ENCODE measurements at regions of chr5 and their contacts with region 1.

Region 1: GRCh38 chr5:137901011-137901817 is 12.0 kb downstream of the PKD2L2 start:
- DNase-seq: peak in 1 of 4 experiments; percentile 47
- ATAC-seq: peak; percentile 67
- H3K4me3 ChIP-seq: 0 out of 2 replicates have a peak overlapping the region, but pooled peaks have one; percentile 7
- H3K27ac ChIP-seq: peak overlapping the region; percentile 43; the same call in 1 of the 3 replicates
- H3K4me1 ChIP-seq: peaks cover 0 to 12% of the 10 kb centered on the region in 2 experiments; a peak in 2 of 5 replicates
- H3K27me3 ChIP-seq: no peaks in the 10 kb centered on the region
- CTCF ChIP-seq: no peak
- EP300 ChIP-seq: no peak
- POLR2A ChIP-seq: no peak
- RAD21 ChIP-seq: no peak

Region 2: GRCh38 chr5:137888857-137889759 is 12.1 kb before region 1 on chr5 and contains the start of gene PKD2L2:
- CTCF ChIA-PET with region 1: no interaction called
- POLR2A ChIA-PET with region 1: interaction called, 10 read pairs
- in situ Hi-C with region 1: no loop called
- intact Hi-C with region 1: no loop called
- DNase-seq: peak; percentile 70 to 94 (median 82)
- ATAC-seq: peak; percentile 99
- H3K4me3 ChIP-seq: peak within 1 kb of the TSS; percentile 58
- H3K27ac ChIP-seq: peak within 1 kb of the TSS; percentile 85
- H3K4me1 ChIP-seq: peaks cover 4 to 14% of the 10 kb centered on the region in 2 experiments; a peak in 3 of 5 replicates
- H3K27me3 ChIP-seq: no peaks in the 10 kb centered on the region
- CTCF ChIP-seq: no peak
- EP300 ChIP-seq: no peak
- POLR2A ChIP-seq: peak; percentile 93
- RAD21 ChIP-seq: no peak
- polyA plus RNA-seq, gene PKD2L2: 0.08 to 0.11 TPM

Measured in K562 (cell line).